B cell (primary cell): ENCODE measurements at regions of chr2 and their contacts with region 1.

Region 1: GRCh38 chr2:60756191-60757041 is at the start of gene PAPOLG:
- DNase-seq: peak; percentile 96
- ATAC-seq: peak; percentile 100
- H3K4me3 ChIP-seq: peak within 1 kb of the TSS; percentile 77 to 100 (median 87)
- H3K4me3 Mint-ChIP-seq: peak within 1 kb of the TSS; percentile 97
- H3K27ac ChIP-seq: peak within 1 kb of the TSS; percentile 85 to 87
- H3K27ac Mint-ChIP-seq: peak within 1 kb of the TSS; percentile 96
- H3K4me1 ChIP-seq: peaks cover 13 to 15% of the 10 kb centered on the region in 2 donors
- H3K4me1 Mint-ChIP-seq: peaks cover 29% of the 10 kb centered on the region
- H3K27me3 ChIP-seq: no peaks in the 10 kb centered on the region
- H3K27me3 Mint-ChIP-seq: no peaks in the 10 kb centered on the region
- CTCF ChIP-seq: no peak
- total RNA-seq, gene PAPOLG: 27.5 and 37.2 TPM in 2 replicates

Region 2: DNA sequence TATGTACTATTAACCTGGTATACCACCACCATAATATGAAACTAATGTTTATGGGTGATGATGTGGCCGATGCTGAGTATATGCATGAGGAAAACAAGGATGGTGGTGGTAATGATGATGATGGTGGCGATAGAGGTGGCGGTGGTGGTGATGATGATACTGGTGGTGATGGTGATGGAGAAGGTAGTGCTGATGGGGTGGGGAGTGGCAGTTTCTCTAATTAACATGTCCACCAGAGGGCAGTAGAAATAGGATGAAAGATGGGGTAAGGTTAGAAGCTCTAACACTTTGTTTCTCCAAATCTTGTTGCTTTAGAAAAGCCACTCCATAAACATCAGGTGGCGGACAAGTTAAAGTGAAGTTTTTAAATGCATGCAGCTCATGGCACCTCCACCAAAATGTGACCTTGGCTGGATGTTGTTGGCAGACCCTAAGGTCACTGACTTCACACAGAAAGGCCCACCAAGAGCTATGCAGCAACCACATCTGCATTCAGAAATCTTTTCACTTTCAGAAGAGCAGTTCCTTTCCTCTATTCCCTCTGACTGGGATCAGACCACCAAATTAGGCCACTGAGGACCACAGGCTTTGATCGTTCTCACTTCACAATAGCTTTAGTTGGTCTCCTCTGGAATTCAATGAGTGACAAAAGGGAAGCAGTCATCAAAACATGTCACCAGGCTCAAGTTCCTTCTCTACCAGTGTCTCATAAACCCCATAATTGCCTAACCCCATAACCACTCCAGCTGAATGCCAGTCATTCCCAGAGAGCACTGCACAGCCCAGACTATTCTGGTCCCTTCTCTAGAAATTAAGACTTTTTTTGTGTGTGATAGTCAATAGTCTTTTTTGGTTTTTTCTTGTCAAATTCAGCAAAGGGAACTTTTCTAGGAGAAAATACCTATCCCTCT is 195.4 kb before region 1 on chr2:
- CTCF ChIA-PET with region 1: no interaction called
- POLR2A ChIA-PET with region 1: interaction called, 11 read pairs
- intact Hi-C with region 1: no loop called
- DNase-seq: peak; percentile 75
- ATAC-seq: peak; percentile 53
- H3K4me3 ChIP-seq: no peak overlapping the region
- H3K4me3 Mint-ChIP-seq: no peak overlapping the region
- H3K27ac ChIP-seq: no peak overlapping the region
- H3K27ac Mint-ChIP-seq: peak overlapping the region; percentile 70
- H3K4me1 ChIP-seq: peaks cover 18% of the 10 kb centered on the region in 2 donors
- H3K4me1 Mint-ChIP-seq: peaks cover 37% of the 10 kb centered on the region
- H3K27me3 ChIP-seq: no peaks in the 10 kb centered on the region
- H3K27me3 Mint-ChIP-seq: no peaks in the 10 kb centered on the region
- CTCF ChIP-seq: peak; percentile 63

Region 3: DNA sequence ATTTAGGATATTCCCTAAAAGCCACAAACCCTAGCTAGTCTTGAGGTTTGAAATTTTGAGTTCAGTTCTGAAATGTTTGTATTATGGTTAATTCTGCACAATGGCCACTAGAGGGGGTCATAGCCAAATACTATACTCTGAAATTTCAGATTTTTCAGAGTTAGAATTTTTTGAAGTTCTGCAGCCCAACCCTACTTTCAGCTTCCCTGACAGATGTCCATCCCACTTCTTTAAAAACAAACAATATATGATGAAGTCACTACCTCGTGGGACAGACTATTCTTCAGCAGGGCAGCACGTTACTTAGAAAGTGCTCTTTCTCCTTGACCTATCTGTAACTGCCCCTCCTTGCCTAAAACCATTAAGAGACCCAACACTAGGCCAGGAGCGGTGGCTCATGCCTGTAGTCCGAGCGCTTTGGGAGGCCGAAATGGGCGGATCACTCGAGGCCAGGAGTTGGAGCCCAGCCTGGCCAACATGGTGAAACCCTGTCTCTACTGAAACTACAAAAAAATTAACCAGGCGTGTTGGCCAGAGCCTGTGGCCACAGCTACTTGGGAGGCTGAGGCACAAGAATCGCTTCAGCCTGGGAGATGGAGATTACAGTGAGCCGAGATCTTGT is 48.6 kb before region 1 on chr2:
- CTCF ChIA-PET with region 1: interaction called, 4 read pairs
- POLR2A ChIA-PET with region 1: no interaction called
- intact Hi-C with region 1: loop called (anchors 5 kb)
- DNase-seq: peak; percentile 60
- ATAC-seq: peak; percentile 43
- H3K4me3 ChIP-seq: no peak overlapping the region
- H3K4me3 Mint-ChIP-seq: no peak overlapping the region
- H3K27ac ChIP-seq: no peak overlapping the region
- H3K27ac Mint-ChIP-seq: no peak overlapping the region
- H3K4me1 ChIP-seq: no peaks in the 10 kb centered on the region
- H3K4me1 Mint-ChIP-seq: no peaks in the 10 kb centered on the region
- H3K27me3 ChIP-seq: no peaks in the 10 kb centered on the region
- H3K27me3 Mint-ChIP-seq: peaks cover 14% of the 10 kb centered on the region
- CTCF ChIP-seq: peak; percentile 89

Region 4: DNA sequence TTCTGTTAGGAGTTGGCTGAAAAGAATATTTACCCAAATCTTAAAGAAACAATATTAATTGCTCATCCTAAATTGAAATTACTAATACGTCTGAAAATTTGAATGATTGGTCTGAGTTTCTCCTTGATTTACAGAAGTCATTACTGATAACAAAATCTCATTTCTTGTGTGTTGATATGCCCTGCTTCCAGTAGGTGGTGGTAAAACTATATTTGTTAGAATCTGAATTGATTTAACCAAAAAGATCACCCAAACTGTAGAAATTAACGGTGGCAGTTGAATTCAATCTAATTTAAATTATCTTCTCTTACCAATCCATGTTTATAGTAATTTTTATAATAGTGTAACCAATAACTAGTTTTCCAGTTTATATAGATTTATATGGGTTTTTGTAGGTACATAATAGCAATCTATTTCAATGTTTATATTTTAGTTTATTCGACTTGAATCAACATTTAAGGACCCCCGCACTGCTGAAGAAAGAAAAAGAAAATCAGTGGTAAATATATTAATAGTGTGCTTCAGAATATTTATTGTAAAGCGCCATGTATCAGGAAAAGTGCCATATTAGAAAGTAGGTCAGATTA is 38.0 kb after region 1 on chr2:
- CTCF ChIA-PET with region 1: no interaction called
- POLR2A ChIA-PET with region 1: interaction called, 3 read pairs
- intact Hi-C with region 1: loop called (anchors 5 kb)
- DNase-seq: peak; percentile 66
- ATAC-seq: no peak
- H3K4me3 ChIP-seq: no peak overlapping the region
- H3K4me3 Mint-ChIP-seq: no peak overlapping the region
- H3K27ac ChIP-seq: peak overlapping the region in 1 of 2 donors; percentile 23
- H3K27ac Mint-ChIP-seq: no peak overlapping the region
- H3K4me1 ChIP-seq: peaks cover 15 to 20% of the 10 kb centered on the region in 2 donors
- H3K4me1 Mint-ChIP-seq: peaks cover 28% of the 10 kb centered on the region
- H3K27me3 ChIP-seq: no peaks in the 10 kb centered on the region
- H3K27me3 Mint-ChIP-seq: no peaks in the 10 kb centered on the region
- CTCF ChIP-seq: peak; percentile 84

Region 5: GRCh38 chr2:61065715-61066709 is 309.6 kb after region 1 on chr2 and contains the start of gene SANBR:
- CTCF ChIA-PET with region 1: no interaction called
- POLR2A ChIA-PET with region 1: no interaction called
- intact Hi-C with region 1: loop called (anchors 1 kb)
- DNase-seq: peak; percentile 89
- ATAC-seq: peak; percentile 98
- H3K4me3 ChIP-seq: peak within 1 kb of the TSS; percentile 45 to 81 (median 70)
- H3K4me3 Mint-ChIP-seq: peak within 1 kb of the TSS; percentile 96
- H3K27ac ChIP-seq: peak within 1 kb of the TSS in 1 of 2 donors; percentile 24
- H3K27ac Mint-ChIP-seq: peak within 1 kb of the TSS; percentile 89
- H3K4me1 ChIP-seq: peaks cover 12 to 17% of the 10 kb centered on the region in 2 donors
- H3K4me1 Mint-ChIP-seq: peaks cover 13% of the 10 kb centered on the region
- H3K27me3 ChIP-seq: no peaks in the 10 kb centered on the region
- H3K27me3 Mint-ChIP-seq: no peaks in the 10 kb centered on the region
- CTCF ChIP-seq: no peak
- total RNA-seq, gene SANBR: 6.6 and 7.4 TPM in 2 replicates

Region 6: GRCh38 chr2:61854474-61855182 is 1098.2 kb after region 1 on chr2:
- CTCF ChIA-PET with region 1: no interaction called
- POLR2A ChIA-PET with region 1: interaction called, 12 read pairs
- intact Hi-C with region 1: loop called (anchors 5 kb)
- DNase-seq: peak; percentile 96
- ATAC-seq: peak; percentile 83
- H3K4me3 ChIP-seq: peak overlapping the region; percentile 92 to 99 (median 98)
- H3K4me3 Mint-ChIP-seq: peak overlapping the region; percentile 94
- H3K27ac ChIP-seq: peak overlapping the region; percentile 56 to 68
- H3K27ac Mint-ChIP-seq: peak overlapping the region; percentile 92
- H3K4me1 ChIP-seq: peaks cover 11 to 16% of the 10 kb centered on the region in 2 donors
- H3K4me1 Mint-ChIP-seq: peaks cover 23% of the 10 kb centered on the region
- H3K27me3 ChIP-seq: no peaks in the 10 kb centered on the region
- H3K27me3 Mint-ChIP-seq: no peaks in the 10 kb centered on the region
- CTCF ChIP-seq: no peak

Region 7: GRCh38 chr2:61888267-61889055 is 1132.0 kb after region 1 on chr2 and contains the start of gene CCT4:
- CTCF ChIA-PET with region 1: no interaction called
- POLR2A ChIA-PET with region 1: no interaction called
- intact Hi-C with region 1: loop called (anchors 10 kb)
- DNase-seq: peak; percentile 98
- ATAC-seq: peak; percentile 85
- H3K4me3 ChIP-seq: peak within 1 kb of the TSS; percentile 79 to 92 (median 89)
- H3K4me3 Mint-ChIP-seq: peak within 1 kb of the TSS; percentile 100
- H3K27ac ChIP-seq: peak within 1 kb of the TSS; percentile 95 to 96
- H3K27ac Mint-ChIP-seq: peak within 1 kb of the TSS; percentile 100
- H3K4me1 ChIP-seq: peaks cover 11 to 25% of the 10 kb centered on the region in 2 donors
- H3K4me1 Mint-ChIP-seq: peaks cover 32% of the 10 kb centered on the region
- H3K27me3 ChIP-seq: no peaks in the 10 kb centered on the region
- H3K27me3 Mint-ChIP-seq: no peaks in the 10 kb centered on the region
- CTCF ChIP-seq: no peak
- total RNA-seq, gene CCT4: 86.4 and 88.0 TPM in 2 replicates